Aorta (tissue), 5 donors: ENCODE measurements at regions of chr16 and their contacts with region 1.

Region 1: DNA sequence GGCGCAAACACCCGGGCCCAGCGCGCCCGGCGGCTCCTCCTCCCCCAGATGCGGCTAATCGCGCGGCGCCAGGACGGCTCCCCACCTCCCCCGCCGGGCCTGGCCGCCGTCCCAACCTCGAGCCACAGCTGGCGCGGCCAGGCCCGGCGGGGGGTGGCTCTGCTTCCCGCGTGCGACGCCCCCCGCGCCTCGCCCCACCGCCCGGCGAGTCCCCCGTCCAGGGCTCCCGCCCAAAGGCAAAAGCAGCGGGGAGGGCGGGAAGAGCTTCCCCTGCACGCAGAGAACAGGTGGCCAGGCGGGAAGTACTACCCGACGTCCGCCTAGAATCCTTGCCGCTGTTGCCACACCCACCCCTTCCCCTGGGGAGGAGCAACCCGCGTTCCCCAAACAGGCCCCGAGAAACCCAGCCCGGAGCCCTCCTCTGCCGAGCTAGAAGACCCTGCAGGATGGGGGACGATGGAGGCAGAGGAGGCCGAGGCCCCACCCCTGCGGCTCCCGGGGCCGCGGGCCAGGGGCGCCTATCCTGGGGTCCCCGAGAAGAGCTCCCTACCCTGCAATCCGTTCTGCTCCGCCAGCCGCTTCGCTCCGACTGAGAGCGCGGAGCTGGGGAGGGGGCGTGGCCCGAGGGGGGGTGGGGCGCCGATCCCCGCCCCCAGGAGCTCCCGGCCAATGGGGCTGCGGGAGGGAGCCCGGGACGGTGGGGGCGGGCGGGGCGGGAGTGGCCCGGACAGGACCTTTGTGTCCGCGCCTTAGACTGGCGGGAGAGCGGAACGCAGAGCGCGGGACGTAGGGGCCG is at the start of gene CARHSP1:
- DNase-seq: peak; percentile 92 to 95
- ATAC-seq: peak; percentile 94
- H3K4me3 ChIP-seq: peak within 1 kb of the TSS; percentile 59 to 82
- H3K27ac ChIP-seq: peak within 1 kb of the TSS in 1 of 2 donors; percentile 13
- H3K4me1 ChIP-seq: no peaks in the 10 kb centered on the region
- H3K27me3 ChIP-seq: no peaks in the 10 kb centered on the region
- total RNA-seq, gene CARHSP1: 53.4 to 69.0 TPM

Region 2: DNA sequence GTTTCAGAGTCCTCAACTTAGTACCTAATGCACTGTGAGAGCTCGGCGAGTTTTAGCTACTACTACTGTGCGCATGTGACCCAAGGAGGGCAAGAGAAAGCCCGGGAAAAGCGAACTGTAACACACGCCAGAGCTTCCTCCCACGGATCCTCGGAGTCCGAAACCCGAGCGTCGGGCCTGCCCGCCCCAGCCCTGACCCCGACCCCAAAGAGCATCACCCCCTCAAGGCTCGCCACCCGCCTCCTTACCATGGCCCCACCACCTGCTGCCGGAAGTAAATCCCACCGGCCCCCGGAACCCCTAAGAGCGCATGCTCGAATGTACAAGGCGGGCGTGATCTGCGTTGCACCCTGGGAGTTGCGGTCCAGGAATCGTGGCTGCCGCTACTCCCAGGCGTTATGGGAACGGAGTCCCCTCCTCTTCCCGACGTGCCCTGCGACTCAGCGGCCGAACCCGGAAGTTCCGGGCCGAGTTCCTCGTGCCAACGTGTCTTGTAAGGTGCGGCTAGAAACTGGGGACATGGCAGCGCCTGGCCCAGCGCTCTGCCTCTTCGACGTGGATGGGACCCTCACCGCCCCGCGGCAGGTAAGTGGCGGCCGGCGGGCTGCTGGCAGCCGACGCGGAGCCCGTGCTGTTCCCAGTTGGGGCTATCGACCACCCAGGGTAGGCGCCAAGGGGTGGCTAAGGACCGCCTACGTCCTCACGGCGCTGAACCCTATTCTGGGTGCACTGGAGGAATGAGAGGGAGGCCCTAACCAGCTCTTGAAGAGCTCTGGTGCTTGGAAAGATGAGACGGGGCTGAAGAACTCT is 71.0 kb before region 1 on chr16 and contains the starts of genes PMM2 and TMEM186:
- intact Hi-C with region 1: loop called (anchors 2 to 5 kb)
- DNase-seq: peak; percentile 98
- ATAC-seq: peak; percentile 98
- H3K4me3 ChIP-seq: peak within 1 kb of the TSS; percentile 86 to 94
- H3K27ac ChIP-seq: peak within 1 kb of the TSS in 1 of 2 donors; percentile 45
- H3K4me1 ChIP-seq: peaks cover 0 to 2% of the 10 kb centered on the region in 2 donors
- H3K27me3 ChIP-seq: no peaks in the 10 kb centered on the region
- total RNA-seq, gene PMM2: 43.1 to 48.4 TPM
- total RNA-seq, gene TMEM186: 5.7 to 7.0 TPM

Region 3: GRCh38 chr16:9402293-9402860 is 533.8 kb after region 1 on chr16:
- intact Hi-C with region 1: no loop called
- DNase-seq: no peak
- ATAC-seq: no peak
- H3K4me3 ChIP-seq: no peak overlapping the region
- H3K27ac ChIP-seq: no peak overlapping the region
- H3K4me1 ChIP-seq: no peaks in the 10 kb centered on the region
- H3K27me3 ChIP-seq: peaks cover 0 to 4% of the 10 kb centered on the region in 2 donors